ENCODE measurements at regions of chrX and their contacts with region 1.

Region 1: DNA sequence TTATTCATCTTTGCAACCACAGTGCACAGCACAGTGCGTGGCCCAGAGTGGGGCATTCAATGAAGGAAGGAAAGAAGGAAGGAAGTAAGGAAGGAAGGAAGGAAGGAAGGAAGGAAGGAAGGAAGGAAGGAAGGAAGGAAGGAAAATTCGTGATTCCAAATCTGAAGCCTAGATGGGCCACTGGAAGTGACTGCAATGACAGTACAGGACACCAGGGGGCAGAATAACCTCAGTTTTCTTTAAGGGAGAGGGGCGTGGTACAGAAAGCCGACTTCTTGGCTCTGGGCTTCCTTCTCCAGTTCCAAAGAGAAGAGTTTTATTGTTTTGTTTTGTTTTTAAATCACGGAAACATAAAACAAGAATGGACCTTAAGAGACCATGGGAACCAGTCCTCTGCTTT is 47.8 kb downstream of the APLN start:
- DNase-seq: peak; percentile 53
- H3K4me3 ChIP-seq: no peak overlapping the region
- H3K27ac ChIP-seq: no peak overlapping the region
- H3K4me1 ChIP-seq: peaks cover 8% of the 10 kb centered on the region
- CTCF ChIP-seq: peak; percentile 78

Region 2: DNA sequence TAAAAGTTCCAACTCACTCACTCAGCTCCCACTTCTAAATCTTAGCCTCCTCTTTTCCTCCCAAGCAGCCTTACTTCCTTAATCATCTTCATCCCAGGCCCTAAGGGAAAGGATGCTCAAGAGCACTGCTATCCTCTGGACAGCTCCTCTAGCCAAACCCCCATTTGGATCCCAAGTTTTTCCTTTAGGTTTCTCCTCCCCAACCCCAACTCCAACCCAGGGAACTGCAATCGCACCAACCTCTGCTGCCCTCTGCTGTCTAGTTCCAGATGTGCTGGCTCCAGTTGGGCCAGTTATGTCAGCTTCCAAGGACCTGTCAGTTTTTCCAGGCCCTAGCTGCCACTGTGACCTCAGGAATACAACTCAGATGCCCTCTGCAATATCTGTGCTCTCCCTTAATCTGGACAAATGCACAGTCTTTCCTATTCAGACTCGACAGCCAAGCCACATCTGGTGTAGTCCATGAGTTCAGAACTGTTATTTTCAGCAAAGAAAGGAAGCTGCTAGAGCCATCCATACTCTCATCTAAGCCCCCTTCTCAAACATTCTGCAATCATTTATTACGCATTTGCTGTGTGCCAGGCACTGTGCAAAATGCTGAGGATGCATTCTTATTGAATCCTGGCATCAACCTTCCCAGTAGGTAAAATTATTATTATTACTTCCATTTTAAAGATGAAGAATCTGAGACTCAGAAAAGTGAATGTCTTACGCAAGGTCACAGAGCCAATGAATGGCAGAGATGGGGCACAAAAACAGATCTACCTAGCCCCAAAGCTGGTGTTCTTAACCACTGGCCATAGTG is 119.6 kb after region 1 on chrX:
- CTCF ChIA-PET with region 1: no interaction called
- POLR2A ChIA-PET with region 1: no interaction called
- intact Hi-C with region 1: loop called (anchors 1 kb)
- DNase-seq: peak; percentile 23
- H3K4me3 ChIP-seq: no peak overlapping the region
- H3K27ac ChIP-seq: no peak overlapping the region
- H3K4me1 ChIP-seq: no peaks in the 10 kb centered on the region
- CTCF ChIP-seq: peak; percentile 77

Region 3: DNA sequence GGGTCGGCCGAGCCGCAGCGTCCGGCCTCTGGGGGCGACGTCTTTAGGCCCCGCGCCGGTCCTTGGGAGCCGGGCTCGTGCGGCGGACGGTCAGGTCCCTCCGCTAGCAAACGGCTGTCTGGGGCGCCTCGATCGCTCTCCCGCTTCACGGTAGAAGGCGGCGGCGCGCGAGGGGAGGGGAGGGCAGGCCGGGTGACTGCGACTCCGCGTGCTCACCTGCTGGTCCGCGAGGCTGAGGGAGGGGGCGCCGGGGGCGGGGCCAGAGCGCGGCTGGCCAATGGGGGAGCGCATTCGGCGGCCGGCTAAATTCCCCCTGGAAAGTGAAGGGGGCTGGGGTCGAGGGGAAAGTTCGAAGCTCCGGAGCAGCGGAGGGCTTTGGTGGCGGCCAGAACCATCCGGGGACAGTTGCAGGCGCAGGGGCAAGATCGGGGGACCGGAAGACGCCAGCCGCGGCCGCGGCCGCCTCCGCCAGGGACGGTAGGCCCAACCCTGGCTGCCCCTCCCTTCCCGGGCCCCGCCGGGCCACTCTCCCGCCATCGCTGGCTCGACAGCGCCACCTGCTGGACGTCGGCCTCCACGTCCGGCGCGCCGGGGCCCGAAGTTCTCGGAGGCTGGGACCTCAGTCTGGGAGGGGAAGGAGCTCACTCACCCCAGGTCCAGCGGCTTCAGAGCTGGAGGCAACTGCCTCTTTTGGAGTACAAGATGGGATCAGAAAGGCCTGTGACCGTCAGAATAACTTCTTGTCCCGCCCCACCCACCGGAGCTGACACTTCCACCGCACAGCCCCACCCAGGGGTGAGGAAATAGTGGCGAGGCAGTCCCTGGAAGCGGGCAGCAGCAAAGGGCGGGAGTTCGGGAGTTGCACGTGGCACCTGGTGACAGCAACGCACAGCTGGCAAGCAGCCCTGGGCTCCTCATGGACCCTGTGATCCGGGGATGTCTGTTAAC is 453.5 kb after region 1 on chrX:
- CTCF ChIA-PET with region 1: interaction called, 4 read pairs
- POLR2A ChIA-PET with region 1: no interaction called
- intact Hi-C with region 1: loop called (anchors 1 kb)
- DNase-seq: peak; percentile 76
- H3K4me3 ChIP-seq: peak overlapping the region; percentile 66
- H3K27ac ChIP-seq: no peak overlapping the region
- H3K4me1 ChIP-seq: peaks cover 10% of the 10 kb centered on the region
- CTCF ChIP-seq: peak; percentile 80